HepG2 (cell line): ENCODE measurements at regions of chr18 and their contacts with region 1.

Region 1: DNA sequence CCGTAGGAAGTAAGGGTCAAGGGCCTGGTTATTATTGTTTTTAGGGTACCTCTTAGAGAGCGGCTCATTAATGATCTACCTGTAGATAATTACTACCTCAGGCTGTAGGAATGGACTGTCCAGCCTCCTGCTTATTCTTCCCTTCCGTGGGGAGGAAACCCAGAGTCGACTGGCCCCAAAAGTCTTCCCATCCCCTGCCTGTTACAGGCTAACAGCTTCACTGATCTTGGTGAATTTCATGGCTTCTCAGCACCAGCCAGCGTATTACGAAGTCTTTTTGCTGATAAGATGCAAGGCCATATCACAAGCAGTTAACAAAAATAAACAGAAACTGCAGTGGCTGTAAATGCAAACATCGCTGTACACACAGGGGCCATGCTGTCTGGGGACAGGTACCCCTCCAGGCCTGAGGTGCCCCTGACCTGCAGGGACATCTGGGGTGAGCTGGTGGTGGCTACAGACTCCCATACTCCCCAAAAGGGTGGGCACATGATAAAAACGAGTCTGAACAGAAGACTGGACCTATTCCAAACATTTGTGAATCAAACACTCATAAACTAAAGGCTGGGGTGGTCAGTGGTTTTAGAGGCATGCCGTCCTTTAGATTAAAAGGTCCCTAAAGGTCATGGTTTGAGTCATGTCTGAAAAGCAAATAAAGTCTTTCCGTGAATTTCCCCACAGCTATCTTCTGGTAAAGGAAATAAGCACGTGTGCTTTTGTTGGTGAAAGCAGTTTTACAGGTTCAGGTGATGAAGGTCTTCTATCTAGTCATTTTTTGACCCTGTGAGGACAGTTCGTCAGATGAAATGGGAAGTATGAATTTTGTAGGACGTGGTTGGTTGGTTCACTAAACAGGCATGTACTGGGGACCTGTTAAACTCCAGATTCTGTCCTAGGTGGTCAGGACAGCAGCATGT is 36.7 kb downstream of the TTC39C start:
- DNase-seq: peak; percentile 90
- ATAC-seq: peak; percentile 86
- H3K4me3 ChIP-seq: peak overlapping the region; percentile 8 to 60 (median 52); a peak in 5 of 6 replicates
- H3K27ac ChIP-seq: peak overlapping the region; percentile 88
- H3K4me1 ChIP-seq: peaks cover 48% of the 10 kb centered on the region
- H3K27me3 ChIP-seq: no peaks in the 10 kb centered on the region
- CTCF ChIP-seq: no peak
- EP300 ChIP-seq: peak in 1 of 2 experiments; percentile 65; a peak in 2 of 4 replicates
- POLR2A ChIP-seq: no peak
- RAD21 ChIP-seq: no peak

Region 2: GRCh38 chr18:24014062-24014985 is 37.0 kb before region 1 on chr18 and contains the start of gene TTC39C:
- CTCF ChIA-PET with region 1: no interaction called
- POLR2A ChIA-PET with region 1: interaction called, 3 read pairs
- in situ Hi-C with region 1: no loop called
- intact Hi-C with region 1: loop called (anchors 1 kb)
- DNase-seq: no peak
- ATAC-seq: peak; percentile 77
- H3K4me3 ChIP-seq: peak within 1 kb of the TSS; percentile 52 to 79 (median 77)
- H3K27ac ChIP-seq: peak within 1 kb of the TSS; percentile 19
- H3K4me1 ChIP-seq: peaks cover 23% of the 10 kb centered on the region
- H3K27me3 ChIP-seq: peaks cover 0 to 35% of the 10 kb centered on the region in 2 experiments; a peak in 3 of 5 replicates
- CTCF ChIP-seq: no peak
- EP300 ChIP-seq: no peak
- POLR2A ChIP-seq: no peak
- RAD21 ChIP-seq: no peak
- total RNA-seq, gene TTC39C: 25.9 and 28.1 TPM in 2 replicates

Region 3: GRCh38 chr18:24063121-24063731 is 11.9 kb after region 1 on chr18:
- CTCF ChIA-PET with region 1: no interaction called
- POLR2A ChIA-PET with region 1: interaction called, 19 read pairs
- in situ Hi-C with region 1: no loop called
- intact Hi-C with region 1: no loop called
- DNase-seq: peak; percentile 21
- ATAC-seq: peak; percentile 71
- H3K4me3 ChIP-seq: no peak overlapping the region
- H3K27ac ChIP-seq: peak overlapping the region; percentile 54
- H3K4me1 ChIP-seq: peaks cover 54% of the 10 kb centered on the region
- H3K27me3 ChIP-seq: no peaks in the 10 kb centered on the region
- CTCF ChIP-seq: no peak
- EP300 ChIP-seq: no peak
- POLR2A ChIP-seq: no peak
- RAD21 ChIP-seq: no peak

Region 4: GRCh38 chr18:24112874-24113615 is 61.8 kb after region 1 on chr18:
- CTCF ChIA-PET with region 1: no interaction called
- POLR2A ChIA-PET with region 1: interaction called, 8 read pairs
- in situ Hi-C with region 1: no loop called
- intact Hi-C with region 1: loop called (anchors 2 kb)
- DNase-seq: peak; percentile 87
- ATAC-seq: peak; percentile 94
- H3K4me3 ChIP-seq: peak overlapping the region; percentile 17 to 66 (median 41); a peak in 3 of 6 replicates
- H3K27ac ChIP-seq: peak overlapping the region; percentile 86
- H3K4me1 ChIP-seq: peaks cover 56% of the 10 kb centered on the region
- H3K27me3 ChIP-seq: no peaks in the 10 kb centered on the region
- CTCF ChIP-seq: 0 out of 2 replicates have a peak, but pooled peaks have one; percentile 20
- EP300 ChIP-seq: peak; percentile 26 to 70; a peak in 3 of 4 replicates
- POLR2A ChIP-seq: peak; percentile 38 to 63; a peak in 2 of 4 replicates
- RAD21 ChIP-seq: no peak